CD4-positive, alpha-beta memory T cell (primary cell): ENCODE measurements at regions of chrX and their contacts with region 1.

Region 1: DNA sequence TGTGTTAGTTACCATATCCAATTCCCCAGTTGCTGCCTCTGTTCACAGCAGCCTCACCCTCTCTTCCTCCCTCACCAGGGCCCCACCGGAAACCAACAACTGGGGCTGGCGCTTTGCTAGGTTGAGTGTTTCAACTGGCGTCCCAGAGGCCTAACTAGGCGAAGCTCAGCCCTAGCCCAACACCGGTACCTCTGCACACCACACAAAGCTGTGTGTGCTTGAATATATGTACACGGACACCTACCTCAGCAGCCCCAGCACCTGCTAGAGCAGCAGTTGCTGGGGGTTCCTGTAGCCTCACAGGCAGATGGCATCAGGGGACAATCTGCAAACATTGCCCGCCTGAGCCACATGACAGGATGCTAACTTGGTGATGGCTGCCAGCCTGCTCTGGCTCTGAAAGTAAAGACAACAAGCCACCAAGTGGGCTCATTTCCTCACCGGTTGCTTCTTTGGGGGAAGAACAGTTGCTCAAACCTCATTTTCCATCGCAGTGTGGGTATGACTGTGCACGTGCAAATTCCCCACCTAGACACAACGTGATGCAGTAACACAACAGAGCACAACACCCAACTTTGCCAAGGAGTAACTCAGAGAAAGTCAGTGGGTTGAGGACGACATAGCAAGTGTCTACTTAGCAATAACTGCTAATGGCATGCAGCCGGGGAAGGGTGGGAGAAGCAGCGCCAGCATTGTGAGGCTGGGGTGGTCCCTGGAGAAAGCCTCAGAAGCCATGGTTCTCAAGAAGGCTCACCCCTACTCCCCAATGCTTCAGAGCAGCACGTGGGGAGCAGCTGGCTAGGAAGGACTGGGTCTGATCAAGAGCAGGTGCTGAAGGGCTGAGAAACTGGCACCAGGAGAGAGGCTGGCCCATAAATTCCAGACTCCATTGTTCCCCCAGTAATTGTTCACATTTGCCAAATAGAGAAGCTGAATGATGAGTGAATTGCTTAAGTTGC is 139.5 kb downstream of the SH3KBP1 start:
- DNase-seq: peak; percentile 83 to 89 (median 85)
- H3K4me3 ChIP-seq: peak overlapping the region in 1 of 2 donors; percentile 4
- H3K4me3 Mint-ChIP-seq: peak overlapping the region; percentile 28 to 88 (median 68)
- H3K27ac ChIP-seq: peak overlapping the region; percentile 60
- H3K27ac Mint-ChIP-seq: peak overlapping the region; percentile 85 to 99 (median 97)
- H3K4me1 ChIP-seq: peaks cover 100% of the 10 kb centered on the region
- H3K4me1 Mint-ChIP-seq: peaks cover 63 to 99% (median 86%) of the 10 kb centered on the region in 4 donors
- H3K27me3 ChIP-seq: no peaks in the 10 kb centered on the region
- H3K27me3 Mint-ChIP-seq: no peaks in the 10 kb centered on the region

Region 2: DNA sequence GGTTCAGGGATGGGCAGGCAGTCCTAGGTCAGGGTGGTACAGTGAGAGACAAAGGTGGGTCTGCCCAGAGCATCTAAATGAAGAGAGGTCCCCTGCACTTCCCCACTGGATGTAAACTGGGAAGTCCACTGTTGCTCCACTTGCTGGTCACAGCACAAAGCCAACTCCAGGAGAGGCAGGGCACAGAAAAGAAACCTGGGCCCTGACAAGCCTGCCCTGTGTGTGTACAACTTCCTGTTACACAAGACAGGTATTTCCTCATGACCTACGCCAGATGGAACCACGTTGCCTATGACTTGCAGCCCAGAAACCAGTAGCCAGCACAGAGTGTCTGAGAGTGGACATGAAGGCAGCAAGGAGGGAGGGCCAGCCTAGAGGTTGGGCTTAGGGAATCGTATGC is 22.3 kb before region 1 on chrX:
- CTCF ChIA-PET with region 1: no interaction called
- POLR2A ChIA-PET with region 1: interaction called, 10 read pairs
- intact Hi-C with region 1: no loop called
- DNase-seq: peak in 2 of 5 donors; percentile 21 to 47
- H3K4me3 ChIP-seq: no peak overlapping the region
- H3K4me3 Mint-ChIP-seq: peak overlapping the region in 7 of 8 donors; percentile 10 to 57 (median 39)
- H3K27ac ChIP-seq: peak overlapping the region; percentile 9
- H3K27ac Mint-ChIP-seq: peak overlapping the region; percentile 43 to 95 (median 77)
- H3K4me1 ChIP-seq: peaks cover 73% of the 10 kb centered on the region
- H3K4me1 Mint-ChIP-seq: peaks cover 30 to 80% (median 61%) of the 10 kb centered on the region in 4 donors
- H3K27me3 ChIP-seq: no peaks in the 10 kb centered on the region
- H3K27me3 Mint-ChIP-seq: no peaks in the 10 kb centered on the region

Region 3: GRCh38 chrX:19791562-19791961 is 43.6 kb after region 1 on chrX:
- CTCF ChIA-PET with region 1: interaction called, 5 read pairs
- POLR2A ChIA-PET with region 1: interaction called, 39 read pairs
- intact Hi-C with region 1: no loop called
- DNase-seq: peak in 2 of 5 donors; percentile 30 to 68
- H3K4me3 ChIP-seq: no peak overlapping the region
- H3K4me3 Mint-ChIP-seq: peak overlapping the region; percentile 33 to 89 (median 70)
- H3K27ac ChIP-seq: no peak overlapping the region
- H3K27ac Mint-ChIP-seq: peak overlapping the region; percentile 7 to 90 (median 73)
- H3K4me1 ChIP-seq: peaks cover 90% of the 10 kb centered on the region
- H3K4me1 Mint-ChIP-seq: peaks cover 45 to 81% (median 68%) of the 10 kb centered on the region in 4 donors
- H3K27me3 ChIP-seq: no peaks in the 10 kb centered on the region
- H3K27me3 Mint-ChIP-seq: no peaks in the 10 kb centered on the region

Region 4: DNA sequence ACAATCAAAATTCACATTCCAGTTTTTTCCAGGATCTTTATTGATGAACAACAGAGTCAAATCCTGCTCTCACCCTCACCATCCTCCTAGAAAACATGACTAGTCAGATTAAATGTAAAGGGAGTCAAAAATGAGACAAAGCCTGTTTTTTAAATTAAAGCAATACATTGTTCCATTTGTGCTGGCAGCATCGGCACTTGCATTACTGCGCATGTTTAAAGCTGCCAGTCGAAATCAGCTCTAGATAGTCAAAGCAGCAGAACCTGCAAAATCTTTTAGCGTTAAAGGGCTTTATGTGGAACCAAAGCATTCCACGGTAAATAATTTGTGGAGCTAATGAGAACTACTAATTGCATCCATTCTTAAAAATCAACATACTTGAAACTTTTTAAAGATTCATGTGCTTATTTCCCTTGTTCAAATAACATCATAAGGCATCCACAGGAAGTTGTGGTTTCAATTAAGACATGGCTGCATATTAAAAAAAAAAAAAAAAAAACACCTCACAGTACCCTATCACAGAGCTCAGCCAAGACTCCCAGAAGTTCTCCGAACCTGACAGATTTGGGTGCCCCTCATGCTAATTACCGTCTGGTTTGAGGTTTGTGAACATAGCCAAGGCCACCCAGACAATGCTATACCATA is 57.2 kb after region 1 on chrX:
- CTCF ChIA-PET with region 1: interaction called, 13 read pairs
- POLR2A ChIA-PET with region 1: interaction called, 109 read pairs
- intact Hi-C with region 1: no loop called
- DNase-seq: peak in 4 of 5 donors; percentile 50 to 60 (median 54)
- H3K4me3 ChIP-seq: peak overlapping the region in 1 of 2 donors; percentile 24
- H3K4me3 Mint-ChIP-seq: peak overlapping the region; percentile 59 to 85 (median 72)
- H3K27ac ChIP-seq: peak overlapping the region; percentile 41
- H3K27ac Mint-ChIP-seq: peak overlapping the region; percentile 85 to 93 (median 92)
- H3K4me1 ChIP-seq: peaks cover 71% of the 10 kb centered on the region
- H3K4me1 Mint-ChIP-seq: peaks cover 30 to 65% (median 49%) of the 10 kb centered on the region in 4 donors
- H3K27me3 ChIP-seq: no peaks in the 10 kb centered on the region
- H3K27me3 Mint-ChIP-seq: no peaks in the 10 kb centered on the region